Posterior cingulate gyrus (tissue), 11 donors: ENCODE measurements at regions of chr3 and their contacts with region 1.

Region 1: GRCh38 chr3:49906004-49906743 is 2.5 kb upstream of the MST1R start:
- DNase-seq: peak in 9 of 10 donors; percentile 23 to 94 (median 62)

Region 2: DNA sequence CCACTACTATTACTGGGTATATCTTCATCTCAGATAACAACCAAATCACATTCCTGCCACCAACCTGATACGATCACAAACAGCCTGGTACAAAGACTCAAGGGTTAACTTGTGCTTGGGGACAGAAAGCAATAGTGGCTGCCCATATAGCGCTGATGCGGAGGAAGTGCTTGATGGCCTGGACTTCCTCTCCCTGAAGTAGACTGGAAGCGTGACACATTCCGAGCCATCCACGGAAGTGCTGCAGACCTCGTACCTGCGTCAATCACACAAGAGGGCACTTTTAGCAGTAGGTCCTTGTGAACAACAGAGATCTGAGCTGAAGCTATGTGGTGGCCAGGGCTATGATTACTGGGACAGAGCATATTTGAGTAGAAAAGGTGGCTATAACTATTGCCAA is 611.8 kb before region 1 on chr3:
- intact Hi-C with region 1: no loop called
- DNase-seq: peak in 2 of 10 donors; percentile 4 to 19

Region 3: GRCh38 chr3:49703443-49703927 is 202.7 kb before region 1 on chr3:
- intact Hi-C with region 1: loop called (anchors 10 kb)
- DNase-seq: peak in 9 of 10 donors; percentile 56 to 96 (median 70)

Region 4: DNA sequence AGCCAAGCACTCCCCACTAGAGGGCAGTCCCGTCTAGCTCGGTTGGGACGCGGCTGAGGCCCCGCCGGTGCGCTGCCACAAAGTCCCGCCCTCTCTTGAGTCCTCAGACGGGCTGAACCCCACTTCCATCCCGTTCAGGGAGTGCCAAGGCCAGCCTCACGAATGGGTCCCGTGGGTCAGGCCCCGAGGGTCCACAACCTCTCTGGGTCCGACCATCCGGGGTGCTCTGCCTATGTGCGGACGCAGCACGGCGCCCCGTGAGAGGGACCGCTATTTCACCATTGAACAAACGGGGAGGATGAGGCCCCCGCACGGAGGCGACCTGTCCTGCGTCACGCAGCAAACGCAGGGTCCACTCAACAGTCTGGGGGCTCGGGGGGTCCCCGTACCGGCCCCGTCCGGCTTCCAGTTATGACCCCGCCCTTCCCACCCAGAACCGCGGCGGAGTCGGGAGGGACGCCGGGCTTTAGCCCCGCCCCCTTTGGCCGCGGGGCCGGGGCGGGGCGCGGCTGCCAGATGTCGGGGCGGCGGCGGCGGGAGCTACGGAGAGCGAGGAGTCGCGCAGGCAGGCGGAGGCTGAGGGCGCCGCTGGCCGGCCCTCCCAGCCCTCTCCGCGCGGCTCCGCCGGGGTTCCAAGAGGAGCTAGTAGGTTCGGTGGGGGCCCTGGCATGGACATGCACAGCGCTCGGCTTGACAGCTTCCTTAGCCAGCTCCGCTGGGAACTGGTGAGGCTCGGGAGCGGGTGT is 103.3 kb before region 1 on chr3 and contains the start of gene INKA1:
- intact Hi-C with region 1: loop called (anchors 2 kb)
- DNase-seq: peak; percentile 80 to 98 (median 90)